ACHN (cell line): ENCODE measurements at regions of chr1 and their contacts with region 1.

Region 1: GRCh38 chr1:230917284-230918135 is 49.2 kb upstream of the C1orf198 start:
- DNase-seq: peak; percentile 72

Region 2: GRCh38 chr1:231211005-231211857 is 293.7 kb after region 1 on chr1:
- in situ Hi-C with region 1: loop called (anchors 25 kb)
- DNase-seq: peak; percentile 75